BJ (cell line): ENCODE measurements at regions of chr3 and their contacts with region 1.

Region 1: DNA sequence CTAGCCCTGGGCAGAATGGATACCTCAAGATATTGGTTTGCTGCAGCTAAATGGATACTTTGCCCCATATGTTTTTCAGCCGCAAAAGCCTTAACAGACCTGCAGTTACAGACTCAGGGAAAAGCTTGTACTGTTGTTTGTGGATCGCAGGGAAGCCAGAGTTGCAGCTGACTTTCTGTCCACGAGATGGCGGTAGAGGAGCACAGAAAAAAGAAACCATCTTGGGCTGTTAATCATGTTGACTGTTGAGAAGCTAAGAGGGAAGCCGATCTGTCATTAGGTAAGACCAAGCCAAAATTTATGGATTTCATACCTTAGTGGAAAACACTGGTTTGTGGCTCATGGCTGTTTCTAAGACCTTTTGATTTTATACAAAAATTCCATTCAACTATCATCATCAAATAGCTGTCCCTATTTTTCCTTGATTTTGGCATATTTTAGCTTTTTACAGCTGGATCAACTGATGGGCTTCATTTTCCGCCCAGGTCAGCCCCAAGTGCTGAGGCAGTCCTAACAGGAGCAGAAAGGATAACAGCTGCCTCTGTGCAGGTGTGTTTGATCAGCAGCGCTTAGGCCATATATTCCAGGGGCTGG is 205.7 kb upstream of the ZPLD1 start:
- DNase-seq: peak; percentile 19
- H3K4me3 ChIP-seq: no peak overlapping the region
- H3K27me3 ChIP-seq: no peaks in the 10 kb centered on the region
- CTCF ChIP-seq: peak; percentile 94

Region 2: DNA sequence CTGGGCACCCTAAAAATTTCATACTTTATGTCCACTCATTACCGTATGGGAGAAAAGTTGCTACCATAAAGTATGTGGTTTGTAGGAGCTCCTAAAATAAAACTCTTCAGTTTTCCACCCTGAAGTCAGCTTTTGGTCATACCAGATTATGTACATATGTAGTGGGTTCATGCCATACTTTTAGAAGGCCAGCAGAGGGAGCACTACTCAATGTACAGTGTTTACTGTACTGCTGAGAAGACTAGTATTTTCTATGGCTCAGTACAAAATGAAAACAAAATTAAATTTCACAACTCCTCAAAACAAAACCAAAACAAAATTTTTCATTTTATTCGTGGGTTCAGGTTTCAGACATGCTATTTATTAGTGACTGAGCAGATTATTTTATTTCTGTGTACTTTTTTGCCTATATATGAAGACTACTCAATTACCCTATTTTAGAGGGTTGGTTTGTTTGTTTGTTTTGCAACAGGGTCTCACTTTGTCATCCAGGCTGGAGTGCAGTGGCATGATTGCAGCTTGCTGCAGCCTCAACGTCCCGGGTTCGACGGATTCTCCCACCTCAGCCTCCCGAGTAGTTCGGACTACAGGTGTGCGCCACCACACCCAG is 425.9 kb before region 1 on chr3:
- CTCF ChIA-PET with region 1: interaction called, 208 read pairs
- POLR2A ChIA-PET with region 1: no interaction called
- DNase-seq: no peak
- H3K4me3 ChIP-seq: no peak overlapping the region
- H3K27me3 ChIP-seq: no peaks in the 10 kb centered on the region
- CTCF ChIP-seq: peak; percentile 81

Region 3: DNA sequence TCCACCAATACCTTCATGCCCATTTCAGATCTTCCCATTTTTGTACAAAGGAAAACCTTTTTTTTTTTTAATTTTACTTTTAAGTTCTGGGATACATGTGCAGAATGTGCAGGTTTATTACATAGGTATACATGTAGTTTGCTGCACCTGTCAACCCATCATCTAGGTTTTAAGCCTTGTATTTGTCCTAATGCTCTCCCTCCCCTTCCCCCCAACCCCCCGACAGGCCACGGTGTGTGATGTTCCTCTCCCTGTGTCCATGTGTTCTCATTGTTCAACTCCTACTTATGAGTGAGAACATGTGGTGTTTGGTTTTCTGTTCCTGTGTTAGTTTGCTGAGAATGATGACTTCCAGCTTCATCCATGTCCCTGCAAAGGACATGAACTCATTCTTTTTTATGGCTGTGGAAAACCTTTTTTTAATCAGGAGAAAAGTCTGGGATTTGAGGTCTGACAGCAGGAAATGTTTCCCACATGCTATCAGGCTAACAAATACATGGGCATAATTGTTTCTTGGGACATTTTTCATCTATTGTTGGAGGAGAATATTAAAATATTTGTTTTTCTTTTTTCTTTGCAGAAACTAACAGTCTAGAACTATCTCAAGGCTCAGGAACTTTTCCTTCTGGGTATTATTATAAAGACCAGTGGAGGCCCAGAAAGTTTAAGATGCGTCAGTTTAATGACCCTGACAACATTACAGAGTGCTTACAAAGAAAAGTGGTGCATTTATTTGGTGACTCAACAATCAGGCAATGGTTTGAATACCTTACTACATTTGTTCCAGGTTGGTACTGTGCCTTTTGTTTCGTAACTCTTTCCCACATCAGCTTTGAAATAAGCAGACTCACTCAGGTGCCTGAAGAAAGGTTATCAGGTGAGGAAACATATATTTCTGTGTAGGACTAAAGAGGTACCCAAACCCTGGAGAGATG is 412.7 kb before region 1 on chr3:
- CTCF ChIA-PET with region 1: interaction called, 208 read pairs
- POLR2A ChIA-PET with region 1: no interaction called
- DNase-seq: peak; percentile 49
- H3K4me3 ChIP-seq: no peak overlapping the region
- H3K27me3 ChIP-seq: no peaks in the 10 kb centered on the region
- CTCF ChIP-seq: no peak

Region 4: GRCh38 chr3:101849051-101849720 is 380.0 kb before region 1 on chr3 and contains the start of gene NFKBIZ:
- CTCF ChIA-PET with region 1: interaction called, 17 read pairs
- POLR2A ChIA-PET with region 1: interaction called, 6 read pairs
- DNase-seq: peak; percentile 66
- H3K4me3 ChIP-seq: peak within 1 kb of the TSS; percentile 67
- H3K27me3 ChIP-seq: no peaks in the 10 kb centered on the region
- CTCF ChIP-seq: no peak
- polyA plus RNA-seq, gene NFKBIZ: 41.6 and 50.1 TPM in 2 replicates

Region 5: DNA sequence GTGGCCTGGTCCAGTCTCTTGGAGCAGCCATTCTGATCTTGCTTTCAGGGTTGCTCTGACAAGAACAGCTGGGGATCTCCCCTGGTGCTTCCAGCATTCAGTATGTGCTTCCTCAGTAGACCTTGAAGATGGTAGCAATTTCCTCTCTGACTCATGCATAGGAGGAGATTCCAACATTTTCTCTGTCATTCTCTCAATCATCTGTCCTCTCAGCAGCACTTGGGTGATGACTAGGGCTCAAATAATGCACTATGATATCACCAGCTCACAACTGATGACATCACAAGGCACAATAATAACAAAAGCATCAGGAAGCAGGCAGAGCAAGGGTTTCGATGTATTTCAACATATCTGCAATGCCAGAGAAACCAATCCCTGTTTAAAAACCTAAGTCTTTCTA is 327.1 kb before region 1 on chr3:
- CTCF ChIA-PET with region 1: interaction called, 15 read pairs
- POLR2A ChIA-PET with region 1: no interaction called
- DNase-seq: peak; percentile 91
- H3K4me3 ChIP-seq: no peak overlapping the region
- H3K27me3 ChIP-seq: no peaks in the 10 kb centered on the region
- CTCF ChIP-seq: no peak

Region 6: GRCh38 chr3:102354818-102355515 is 125.8 kb after region 1 on chr3:
- CTCF ChIA-PET with region 1: no interaction called
- POLR2A ChIA-PET with region 1: no interaction called
- DNase-seq: no peak
- H3K4me3 ChIP-seq: no peak overlapping the region
- H3K27me3 ChIP-seq: no peaks in the 10 kb centered on the region
- CTCF ChIP-seq: no peak

Region 7: DNA sequence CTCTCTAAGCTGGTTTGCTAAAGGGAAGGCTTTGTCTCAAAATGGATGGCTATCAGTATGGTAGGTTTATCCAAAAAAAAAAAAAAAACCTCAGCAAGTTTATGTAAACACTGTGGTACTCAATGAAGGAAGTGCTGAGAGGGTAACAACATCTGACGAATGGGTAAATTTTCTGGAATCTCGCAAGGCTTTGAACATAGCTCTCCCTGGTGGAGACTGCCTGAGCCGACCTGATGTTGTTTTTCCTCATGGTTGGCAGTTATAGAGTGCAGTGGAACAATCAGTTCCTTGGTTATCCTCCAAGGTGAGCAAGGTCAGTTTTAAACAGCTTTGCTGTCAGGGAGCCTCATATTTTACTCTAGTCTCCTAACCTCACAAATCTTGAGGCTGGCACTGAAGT is 300.3 kb after region 1 on chr3:
- CTCF ChIA-PET with region 1: interaction called, 50 read pairs
- POLR2A ChIA-PET with region 1: no interaction called
- DNase-seq: no peak
- H3K4me3 ChIP-seq: no peak overlapping the region
- H3K27me3 ChIP-seq: no peaks in the 10 kb centered on the region
- CTCF ChIP-seq: 0 out of 2 replicates have a peak, but pooled peaks have one; percentile 8

Region 8: DNA sequence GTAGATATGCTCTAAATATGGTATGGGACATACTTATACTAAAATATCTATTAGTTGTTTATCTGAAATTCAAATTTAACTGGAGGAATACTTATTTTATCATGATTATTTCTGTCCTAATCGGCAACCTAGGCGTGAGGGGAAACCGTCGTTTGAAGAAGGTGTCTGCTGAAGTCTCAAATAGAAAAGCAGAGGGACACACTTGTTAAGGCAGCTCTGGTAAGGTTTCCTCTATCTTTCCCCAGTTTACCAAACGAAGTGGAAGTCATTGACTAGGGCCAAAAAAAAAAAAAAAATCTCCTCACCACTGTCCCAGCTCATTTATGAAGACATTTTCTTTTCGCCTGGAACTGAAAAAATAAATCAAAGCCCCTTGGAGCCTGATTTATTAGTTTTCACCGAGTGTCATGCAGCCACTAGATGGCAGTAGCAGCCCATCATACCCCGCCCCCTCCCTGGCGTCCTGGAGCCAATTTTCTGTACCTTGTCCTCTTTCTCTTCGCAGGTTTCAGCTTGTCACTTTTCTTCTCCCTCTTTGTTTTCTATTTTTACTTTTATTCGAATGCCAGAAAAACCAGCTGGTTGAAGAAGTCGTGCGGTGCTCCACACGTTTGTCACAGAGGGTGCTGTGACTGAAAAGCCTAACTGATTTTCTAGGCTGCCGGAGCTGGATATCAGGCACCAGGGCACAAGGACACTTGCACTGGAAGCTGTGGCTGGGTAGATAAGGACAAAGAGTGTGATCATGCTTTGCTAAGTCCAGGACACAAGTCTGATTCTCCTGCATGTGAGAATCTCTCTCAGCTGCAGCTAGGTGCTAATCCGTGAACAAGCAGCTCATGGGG is 444.3 kb after region 1 on chr3:
- CTCF ChIA-PET with region 1: no interaction called
- POLR2A ChIA-PET with region 1: interaction called, 19 read pairs
- DNase-seq: no peak
- H3K4me3 ChIP-seq: no peak overlapping the region
- H3K27me3 ChIP-seq: no peaks in the 10 kb centered on the region
- CTCF ChIP-seq: peak; percentile 88